ENCODE measurements at regions of chr3 and their contacts with region 1.

Region 1: GRCh38 chr3:49476563-49476962 is 6.5 kb downstream of the DAG1 start:
- DNase-seq: no peak
- ATAC-seq: no peak
- H3K4me3 Mint-ChIP-seq: no peak overlapping the region
- H3K27ac Mint-ChIP-seq: peak overlapping the region in 1 of 10 donors; percentile 3
- H3K4me1 Mint-ChIP-seq: peaks cover 8 to 28% (median 16%) of the 10 kb centered on the region in 4 donors
- H3K27me3 Mint-ChIP-seq: no peaks in the 10 kb centered on the region

Region 2: GRCh38 chr3:49081429-49081828 is 395.1 kb before region 1 on chr3:
- POLR2A ChIA-PET with region 1: no interaction called
- DNase-seq: no peak
- ATAC-seq: no peak
- H3K4me3 Mint-ChIP-seq: no peak overlapping the region
- H3K27ac Mint-ChIP-seq: peak overlapping the region in 2 of 10 donors; percentile 41 to 61
- H3K4me1 Mint-ChIP-seq: peaks cover 6 to 45% (median 19%) of the 10 kb centered on the region in 4 donors
- H3K27me3 Mint-ChIP-seq: no peaks in the 10 kb centered on the region

Region 3: DNA sequence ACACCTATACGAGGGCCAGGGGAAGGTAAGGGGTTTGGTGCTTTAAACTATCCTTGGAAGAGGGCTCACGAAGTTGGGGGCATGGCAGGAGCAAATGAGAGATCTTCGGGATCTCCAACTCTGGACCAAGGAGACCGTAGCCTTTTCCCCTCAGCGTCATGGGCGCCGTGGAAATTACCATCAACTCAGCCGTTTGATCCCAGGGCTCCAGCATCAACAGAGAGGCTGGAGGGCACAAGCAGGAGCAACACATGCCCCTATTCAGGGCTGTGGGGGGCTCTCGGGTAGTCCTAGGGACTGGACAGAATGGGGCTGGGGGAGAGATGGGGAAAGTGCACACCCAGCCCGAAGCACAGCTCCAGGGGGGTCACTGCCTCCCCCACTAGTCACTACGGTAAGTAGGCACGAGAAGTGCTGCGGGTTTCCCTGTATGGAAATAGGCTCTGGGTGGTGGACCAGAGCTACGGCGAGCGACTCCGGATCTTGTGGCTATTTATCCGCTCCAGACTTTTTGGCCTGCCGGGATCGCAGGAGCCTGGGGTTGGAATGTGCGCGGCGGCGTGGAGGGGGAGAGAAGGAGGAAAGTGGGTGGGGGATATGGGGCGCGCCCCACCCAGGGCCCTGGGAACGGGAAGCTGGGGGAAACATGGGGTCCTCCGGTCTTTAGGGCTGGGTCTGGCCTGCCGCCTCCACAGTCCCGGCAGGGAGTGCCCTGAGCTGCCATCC is 343.2 kb before region 1 on chr3:
- POLR2A ChIA-PET with region 1: no interaction called
- DNase-seq: no peak
- ATAC-seq: no peak
- H3K4me3 Mint-ChIP-seq: peak overlapping the region in 6 of 10 donors; percentile 36 to 50 (median 42)
- H3K27ac Mint-ChIP-seq: peak overlapping the region in 3 of 10 donors; percentile 14 to 71 (median 51)
- H3K4me1 Mint-ChIP-seq: peaks cover 2 to 9% (median 8%) of the 10 kb centered on the region in 4 donors
- H3K27me3 Mint-ChIP-seq: peaks cover 3 to 48% (median 23%) of the 10 kb centered on the region in 5 donors

Region 4: GRCh38 chr3:49358217-49358883 is 118.2 kb before region 1 on chr3 and contains the start of gene GPX1:
- POLR2A ChIA-PET with region 1: interaction called, 11 read pairs
- DNase-seq: peak; percentile 49 to 88 (median 69)
- ATAC-seq: peak; percentile 65 to 77
- H3K4me3 Mint-ChIP-seq: peak within 1 kb of the TSS; percentile 87 to 98 (median 95)
- H3K27ac Mint-ChIP-seq: peak within 1 kb of the TSS; percentile 90 to 99 (median 96)
- H3K4me1 Mint-ChIP-seq: peaks cover 16 to 48% (median 36%) of the 10 kb centered on the region in 4 donors
- H3K27me3 Mint-ChIP-seq: no peaks in the 10 kb centered on the region
- polyA plus RNA-seq, gene GPX1: 149 to 249 (median 224) TPM

Measured in naive thymus-derived CD8-positive, alpha-beta T cell (primary cell).